Activated T-helper 1 cell treated with anti-CD3 and anti-CD28 coated beads, Interleukin-12 subunit alpha, Interleukin-12 subunit beta, Interleukin-2, Interleukin-4 antibody, amounts not matched to agents 30 ng/mL and 10 ng/mL and 1 ng/mL, durations not matched to agents 14 hours and 24 hours and 36 hours (primary cell): ENCODE measurements at regions of chr19 and their contacts with region 1.

Region 1: DNA sequence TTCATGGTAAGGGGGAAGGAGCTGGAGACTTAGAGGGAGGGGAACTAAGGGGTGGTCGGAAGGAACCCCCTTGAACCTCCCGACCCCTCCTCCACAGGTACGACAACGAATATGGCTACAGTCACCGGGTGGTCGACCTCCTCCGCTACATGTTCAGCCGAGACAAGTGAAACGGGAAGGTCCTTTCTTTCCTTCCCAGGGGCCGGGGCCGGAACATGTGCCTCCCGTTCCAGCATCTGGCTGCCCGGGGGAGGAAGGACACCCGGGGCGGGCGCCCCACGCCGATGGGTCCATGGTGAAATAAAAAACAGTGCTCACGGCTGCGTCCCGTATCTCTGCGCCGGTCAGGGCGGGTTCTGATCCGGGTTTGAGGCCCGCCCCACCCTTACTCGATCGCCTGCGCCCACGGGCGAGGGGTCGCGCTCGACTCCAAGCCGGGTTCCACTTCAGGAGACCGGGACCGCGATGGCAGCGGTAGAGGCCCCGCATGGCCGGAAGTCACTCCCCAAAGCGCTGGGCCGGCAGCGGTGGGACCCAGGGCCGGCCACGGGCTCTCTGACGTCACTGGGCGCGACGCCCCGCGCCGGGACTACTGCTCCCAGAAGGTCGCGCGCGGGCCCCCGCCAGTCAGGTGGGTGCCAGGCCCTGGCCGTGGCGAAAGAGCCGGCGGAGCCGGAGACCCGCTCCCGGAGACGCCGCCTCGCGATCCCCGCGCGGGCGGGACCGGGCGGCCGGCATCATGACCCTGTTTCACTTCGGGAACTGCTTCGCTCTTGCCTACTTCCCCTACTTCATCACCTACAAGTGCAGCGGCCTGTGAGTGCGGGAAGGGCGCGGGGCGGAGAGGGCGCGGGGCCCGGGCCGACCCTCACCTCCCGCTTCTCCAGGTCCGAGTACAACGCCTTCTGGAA is at the start of gene TMEM147:
- DNase-seq: peak; percentile 82
- H3K4me3 Mint-ChIP-seq: peak within 1 kb of the TSS; percentile 97
- H3K27ac Mint-ChIP-seq: peak within 1 kb of the TSS; percentile 91
- H3K4me1 Mint-ChIP-seq: peaks cover 34% of the 10 kb centered on the region
- H3K27me3 Mint-ChIP-seq: no peaks in the 10 kb centered on the region
- total RNA-seq, gene TMEM147: 122 and 123 TPM in 2 replicates

Region 2: GRCh38 chr19:35347171-35347929 is 197.9 kb before region 1 on chr19 and contains the start of gene FFAR1:
- intact Hi-C with region 1: loop called (anchors 1 kb)
- DNase-seq: peak; percentile 42
- H3K4me3 Mint-ChIP-seq: peak within 1 kb of the TSS; percentile 74
- H3K27ac Mint-ChIP-seq: peak within 1 kb of the TSS; percentile 99
- H3K4me1 Mint-ChIP-seq: peaks cover 37% of the 10 kb centered on the region
- H3K27me3 Mint-ChIP-seq: peaks cover 4% of the 10 kb centered on the region
- total RNA-seq, gene FFAR1: 0.12 and 0.18 TPM in 2 replicates

Region 3: GRCh38 chr19:35557539-35558399 is 12.5 kb after region 1 on chr19:
- intact Hi-C with region 1: loop called (anchors 1 kb)
- DNase-seq: peak; percentile 21
- H3K4me3 Mint-ChIP-seq: peak overlapping the region; percentile 76
- H3K27ac Mint-ChIP-seq: no peak overlapping the region
- H3K4me1 Mint-ChIP-seq: no peaks in the 10 kb centered on the region
- H3K27me3 Mint-ChIP-seq: peaks cover 26% of the 10 kb centered on the region

Region 4: DNA sequence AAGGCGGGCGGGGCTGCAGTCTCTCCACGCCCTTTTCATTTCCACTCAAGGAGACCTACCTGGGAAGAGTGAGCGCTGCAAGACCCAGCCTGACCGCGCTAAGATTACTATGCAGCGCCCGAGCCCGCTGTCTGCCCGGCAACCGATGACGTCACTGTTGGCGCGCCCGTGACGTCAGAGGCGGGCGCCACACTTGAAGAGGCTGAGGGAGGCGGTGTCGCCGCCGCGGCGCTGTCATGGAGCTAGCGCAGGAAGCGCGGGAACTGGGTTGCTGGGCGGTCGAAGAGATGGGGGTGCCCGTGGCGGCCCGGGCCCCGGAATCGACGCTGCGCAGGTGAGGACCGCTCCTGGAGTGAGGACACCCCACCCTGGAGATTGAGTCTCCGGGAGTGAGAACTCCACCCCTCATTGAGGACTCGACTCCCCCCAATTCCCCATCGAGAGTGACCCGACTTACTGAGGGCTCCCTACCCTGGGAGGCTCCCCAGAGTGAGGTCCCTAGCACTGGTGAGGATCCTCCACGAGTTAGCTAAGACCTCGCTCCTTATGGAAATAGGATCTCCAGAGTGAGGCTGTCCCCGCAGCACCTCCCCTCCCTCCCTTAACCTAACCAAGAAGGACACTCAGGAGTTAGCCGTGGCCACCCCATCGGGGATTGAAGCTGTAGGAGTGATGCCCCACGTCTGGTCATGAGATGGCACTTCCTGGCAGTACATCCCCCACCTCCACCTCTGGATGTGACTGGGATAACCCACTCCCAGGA is 67.5 kb after region 1 on chr19 and contains the start of gene HAUS5:
- intact Hi-C with region 1: loop called (anchors 1 kb)
- DNase-seq: peak; percentile 96
- H3K4me3 Mint-ChIP-seq: peak within 1 kb of the TSS; percentile 87
- H3K27ac Mint-ChIP-seq: peak within 1 kb of the TSS; percentile 92
- H3K4me1 Mint-ChIP-seq: peaks cover 33% of the 10 kb centered on the region
- H3K27me3 Mint-ChIP-seq: peaks cover 3% of the 10 kb centered on the region
- total RNA-seq, gene HAUS5: 41.0 and 48.4 TPM in 2 replicates

Region 5: GRCh38 chr19:35740423-35741202 is 195.4 kb after region 1 on chr19:
- intact Hi-C with region 1: loop called (anchors 5 kb)
- DNase-seq: peak; percentile 95
- H3K4me3 Mint-ChIP-seq: peak overlapping the region; percentile 93
- H3K27ac Mint-ChIP-seq: peak overlapping the region; percentile 93
- H3K4me1 Mint-ChIP-seq: peaks cover 23% of the 10 kb centered on the region
- H3K27me3 Mint-ChIP-seq: peaks cover 2% of the 10 kb centered on the region